Calu3 (cell line): ENCODE measurements at regions of chr4 and their contacts with region 1.

Region 1: GRCh38 chr4:105586638-105587328 is 34.4 kb downstream of the ARHGEF38 start:
- DNase-seq: no peak
- H3K4me3 Mint-ChIP-seq: peak overlapping the region; percentile 51
- H3K27ac Mint-ChIP-seq: peak overlapping the region; percentile 54
- H3K4me1 Mint-ChIP-seq: peaks cover 46% of the 10 kb centered on the region
- H3K27me3 Mint-ChIP-seq: no peaks in the 10 kb centered on the region
- CTCF ChIP-seq: no peak

Region 2: DNA sequence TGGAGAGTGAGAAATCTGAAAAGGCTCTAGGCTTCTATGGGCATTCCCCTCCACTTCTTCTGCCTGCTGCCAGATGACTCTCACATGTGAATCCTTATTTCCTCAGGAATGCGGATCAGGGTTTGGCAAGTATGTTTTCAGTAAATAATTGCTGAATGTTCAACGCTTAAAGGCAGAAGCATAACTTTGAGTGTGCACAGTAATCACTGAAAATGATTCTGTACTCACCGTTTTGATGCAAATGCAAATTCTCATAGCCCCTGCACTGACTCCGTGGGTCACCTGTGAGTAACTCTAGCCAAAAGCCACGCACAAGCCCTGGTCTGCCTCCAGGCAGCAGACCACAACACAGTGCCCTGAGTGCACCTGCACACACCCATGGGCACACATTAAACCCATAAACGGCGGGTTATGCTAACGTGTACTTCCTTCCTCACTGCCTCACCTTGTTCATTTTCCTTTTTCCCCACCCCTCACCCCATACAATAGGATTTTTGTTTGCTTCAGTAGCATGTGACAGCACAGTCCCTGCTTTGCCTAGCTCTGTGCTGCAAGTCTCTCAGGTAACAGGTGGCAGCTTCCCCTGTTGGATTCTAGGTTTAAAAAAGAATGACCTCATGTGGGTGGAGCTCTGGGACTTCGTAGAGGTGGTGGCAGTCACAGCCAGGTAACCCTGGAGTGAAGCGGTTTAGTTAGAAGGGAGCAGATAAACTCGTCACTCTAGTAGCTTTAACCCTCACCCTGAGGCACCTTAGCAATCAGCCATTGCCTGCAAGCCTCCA is 34.6 kb before region 1 on chr4 and contains the start of gene ARHGEF38:
- CTCF ChIA-PET with region 1: interaction called, 4 read pairs
- intact Hi-C with region 1: loop called (anchors 2 kb)
- DNase-seq: peak; percentile 80
- H3K4me3 Mint-ChIP-seq: peak within 1 kb of the TSS; percentile 76
- H3K27ac Mint-ChIP-seq: peak within 1 kb of the TSS; percentile 91
- H3K4me1 Mint-ChIP-seq: peaks cover 33% of the 10 kb centered on the region
- H3K27me3 Mint-ChIP-seq: no peaks in the 10 kb centered on the region
- CTCF ChIP-seq: no peak
- total RNA-seq, gene ARHGEF38: 16.6 and 22.8 TPM in 2 replicates

Region 3: DNA sequence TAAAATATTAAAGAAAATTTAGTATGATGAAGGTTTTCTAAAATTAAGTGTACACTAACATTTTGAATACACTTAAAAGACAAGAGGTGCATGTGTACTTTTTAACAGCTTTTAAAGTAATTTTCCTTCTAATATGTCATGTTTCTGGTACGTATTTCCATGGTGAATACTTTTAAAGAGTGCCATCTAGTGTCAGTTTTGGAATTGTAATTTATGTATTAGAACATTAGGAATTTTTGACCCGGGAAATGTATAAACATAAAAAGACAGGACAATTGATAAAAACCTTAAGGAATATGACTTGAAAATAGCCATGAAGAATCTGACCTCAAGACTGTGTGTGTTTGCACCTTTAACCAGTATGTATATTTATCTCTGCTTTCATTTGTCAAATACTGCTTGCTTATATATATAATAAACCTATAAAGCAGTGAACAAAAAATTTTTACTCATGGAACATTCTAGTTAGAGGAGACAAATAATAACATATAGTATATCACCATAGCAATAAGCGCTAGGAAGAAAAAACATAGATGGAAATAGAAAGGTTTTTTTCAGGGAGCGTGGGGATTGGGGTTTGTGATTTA is 129.0 kb after region 1 on chr4:
- CTCF ChIA-PET with region 1: no interaction called
- intact Hi-C with region 1: no loop called
- DNase-seq: no peak
- H3K4me3 Mint-ChIP-seq: no peak overlapping the region
- H3K27ac Mint-ChIP-seq: no peak overlapping the region
- H3K4me1 Mint-ChIP-seq: peaks cover 14% of the 10 kb centered on the region
- H3K27me3 Mint-ChIP-seq: no peaks in the 10 kb centered on the region
- CTCF ChIP-seq: no peak